ENCODE measurements at regions of chr6 and their contacts with region 1.

Region 1: GRCh38 chr6:162360901-162361567 is 366.5 kb downstream of the PRKN start:
- DNase-seq: no peak
- H3K4me3 ChIP-seq: no peak overlapping the region
- H3K27ac ChIP-seq: no peak overlapping the region
- H3K4me1 ChIP-seq: no peaks in the 10 kb centered on the region
- H3K27me3 ChIP-seq: no peaks in the 10 kb centered on the region
- CTCF ChIP-seq: no peak

Region 2: GRCh38 chr6:162198925-162199324 is 162.1 kb before region 1 on chr6:
- intact Hi-C with region 1: no loop called
- DNase-seq: no peak
- H3K4me3 ChIP-seq: no peak overlapping the region
- H3K27ac ChIP-seq: no peak overlapping the region
- H3K4me1 ChIP-seq: peaks cover 0 to 11% (median 4%) of the 10 kb centered on the region in 4 donors
- H3K27me3 ChIP-seq: no peaks in the 10 kb centered on the region
- CTCF ChIP-seq: no peak

Region 3: GRCh38 chr6:162331911-162332310 is 29.1 kb before region 1 on chr6:
- intact Hi-C with region 1: loop called (anchors 1 kb)
- DNase-seq: no peak
- H3K4me3 ChIP-seq: no peak overlapping the region
- H3K27ac ChIP-seq: no peak overlapping the region
- H3K4me1 ChIP-seq: no peaks in the 10 kb centered on the region
- H3K27me3 ChIP-seq: no peaks in the 10 kb centered on the region
- CTCF ChIP-seq: no peak

Region 4: GRCh38 chr6:162395181-162395580 is 34.1 kb after region 1 on chr6:
- intact Hi-C with region 1: no loop called
- DNase-seq: no peak
- H3K4me3 ChIP-seq: no peak overlapping the region
- H3K27ac ChIP-seq: no peak overlapping the region
- H3K4me1 ChIP-seq: peaks cover 0 to 6% (median 0%) of the 10 kb centered on the region in 4 donors
- H3K27me3 ChIP-seq: no peaks in the 10 kb centered on the region
- CTCF ChIP-seq: no peak

Region 5: DNA sequence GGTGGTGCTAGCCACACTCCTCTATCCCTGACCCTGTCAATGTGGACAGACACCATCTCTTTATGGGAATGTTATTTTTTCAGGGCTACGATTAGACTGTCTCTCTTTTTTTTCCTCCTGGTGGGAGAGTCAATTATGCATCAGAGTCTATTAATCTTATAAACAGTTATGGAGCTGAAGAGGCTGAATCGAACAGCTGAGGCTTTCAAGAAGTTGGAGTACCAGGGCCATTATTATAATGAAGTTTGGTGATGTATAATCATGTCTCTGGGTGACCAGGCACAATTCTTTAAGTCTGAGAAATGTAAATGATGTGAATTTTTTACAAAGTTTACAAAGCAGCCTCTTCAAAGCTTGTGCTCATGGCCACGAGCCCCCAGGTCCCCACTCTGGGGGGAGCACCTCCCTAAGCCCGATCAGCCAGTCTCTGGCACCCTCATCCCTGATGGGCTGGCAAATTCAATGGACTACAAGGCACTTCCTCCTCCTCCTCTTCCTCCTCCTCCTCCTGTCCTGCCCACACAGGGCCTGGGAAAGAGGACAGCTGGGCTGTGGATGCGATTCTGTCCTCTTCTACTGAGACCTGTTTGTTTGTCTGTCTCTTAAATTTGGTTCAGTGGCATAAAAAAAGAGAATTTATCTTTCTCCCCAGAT is 1009.6 kb after region 1 on chr6:
- intact Hi-C with region 1: no loop called
- DNase-seq: no peak
- H3K4me3 ChIP-seq: no peak overlapping the region
- H3K27ac ChIP-seq: no peak overlapping the region
- H3K4me1 ChIP-seq: no peaks in the 10 kb centered on the region
- H3K27me3 ChIP-seq: no peaks in the 10 kb centered on the region
- CTCF ChIP-seq: no peak